ENCODE measurements at regions of chr2 and their contacts with region 1.

Region 1: DNA sequence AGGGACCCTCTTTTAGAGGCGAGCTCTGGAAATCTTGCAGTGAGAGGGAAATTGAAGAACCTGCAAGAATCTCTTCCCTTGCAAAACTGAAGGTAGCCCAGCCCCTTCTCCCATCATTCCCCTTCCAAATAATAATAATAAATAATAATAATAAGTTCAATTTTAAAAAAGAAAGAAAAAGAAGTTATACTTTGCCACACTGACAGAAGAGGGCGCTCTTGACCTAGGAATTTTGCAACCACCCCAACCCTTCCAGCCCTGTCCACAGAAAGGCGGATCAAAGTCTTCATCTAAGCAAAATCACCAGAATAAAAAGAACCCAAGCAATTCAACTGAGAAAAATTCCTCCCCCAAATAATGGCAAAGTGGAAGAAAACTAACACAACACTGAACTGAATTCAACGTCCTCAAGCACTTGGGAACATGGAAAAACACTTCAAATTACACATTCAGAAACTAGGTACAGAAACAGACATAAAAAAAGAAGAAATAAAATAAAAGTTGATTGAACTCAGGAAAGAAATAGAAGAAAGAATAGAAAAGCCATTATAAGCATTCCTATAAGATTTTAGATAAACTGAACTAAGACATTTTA is 98.9 kb upstream of the GLS start:
- DNase-seq: no peak
- ATAC-seq: no peak
- H3K4me3 Mint-ChIP-seq: no peak overlapping the region
- H3K27ac Mint-ChIP-seq: no peak overlapping the region
- H3K4me1 Mint-ChIP-seq: no peaks in the 10 kb centered on the region
- H3K27me3 Mint-ChIP-seq: peaks cover 4% of the 10 kb centered on the region
- CTCF ChIP-seq: no peak

Region 2: DNA sequence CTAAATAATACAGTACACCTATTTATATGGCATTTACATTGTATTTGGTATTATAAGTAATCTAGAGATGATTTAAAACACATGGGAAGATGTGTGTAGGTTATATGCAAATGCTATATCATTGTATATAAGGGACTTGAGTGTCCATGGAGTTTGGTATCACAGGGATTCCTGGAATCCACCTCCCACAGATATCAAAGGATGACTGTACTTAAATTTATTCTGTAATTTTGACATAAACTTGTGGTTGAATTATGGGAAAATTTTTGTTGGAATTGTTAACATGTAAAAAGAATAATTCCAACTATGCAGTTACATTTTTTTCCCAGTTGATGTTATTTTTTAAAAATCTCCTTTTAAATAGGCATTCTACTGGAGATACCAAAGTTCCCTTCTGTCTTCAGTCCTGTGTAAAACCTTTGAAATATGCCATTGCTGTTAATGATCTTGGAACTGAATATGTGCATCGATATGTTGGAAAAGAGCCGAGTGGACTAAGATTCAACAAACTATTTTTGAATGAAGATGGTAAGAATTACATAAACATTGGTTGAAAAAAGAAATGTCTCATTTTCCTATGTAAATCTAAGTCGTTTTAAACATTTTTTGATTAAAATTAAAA is 123.0 kb after region 1 on chr2:
- CTCF ChIA-PET with region 1: no interaction called
- POLR2A ChIA-PET with region 1: no interaction called
- intact Hi-C with region 1: loop called (anchors 10 kb)
- DNase-seq: no peak
- ATAC-seq: no peak
- H3K4me3 Mint-ChIP-seq: no peak overlapping the region
- H3K27ac Mint-ChIP-seq: no peak overlapping the region
- H3K4me1 Mint-ChIP-seq: no peaks in the 10 kb centered on the region
- H3K27me3 Mint-ChIP-seq: no peaks in the 10 kb centered on the region
- CTCF ChIP-seq: no peak

Region 3: GRCh38 chr2:190996338-190996946 is 214.7 kb after region 1 on chr2:
- CTCF ChIA-PET with region 1: no interaction called
- POLR2A ChIA-PET with region 1: no interaction called
- intact Hi-C with region 1: loop called (anchors 1 kb)
- DNase-seq: no peak
- ATAC-seq: peak; percentile 82
- H3K4me3 Mint-ChIP-seq: no peak overlapping the region
- H3K27ac Mint-ChIP-seq: no peak overlapping the region
- H3K4me1 Mint-ChIP-seq: peaks cover 6% of the 10 kb centered on the region
- H3K27me3 Mint-ChIP-seq: no peaks in the 10 kb centered on the region
- CTCF ChIP-seq: peak; percentile 19

Measured in activated B cell treated with CpG ODN at 0.5 μM for 24 hours (primary cell).